GM10248 (cell line): ENCODE measurements at regions of chr2 and their contacts with region 1.

Region 1: GRCh38 chr2:98412751-98413458 is 31.8 kb upstream of the INPP4A start:
- DNase-seq: peak; percentile 63
- CTCF ChIP-seq: peak; percentile 68

Region 2: DNA sequence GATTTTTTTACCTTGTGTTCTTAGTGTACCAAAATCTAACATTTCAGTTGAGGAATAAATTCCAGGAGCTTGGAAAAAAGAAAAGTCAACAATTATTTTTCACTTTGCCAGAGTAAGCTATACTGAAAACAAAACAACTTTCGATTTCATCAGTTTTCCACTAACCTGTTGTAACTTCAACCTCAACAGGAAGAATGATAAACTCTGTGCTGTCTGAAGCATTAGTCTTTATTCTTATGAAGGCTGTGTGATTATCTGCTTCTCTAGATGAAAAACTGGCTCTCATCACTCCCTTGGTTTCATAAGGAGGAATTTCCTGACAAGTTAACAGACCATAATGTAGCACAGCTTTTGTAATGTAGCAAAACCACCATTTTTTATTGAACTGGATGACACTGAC is 578.3 kb before region 1 on chr2:
- CTCF ChIA-PET with region 1: no interaction called
- POLR2A ChIA-PET with region 1: no interaction called
- DNase-seq: no peak
- CTCF ChIP-seq: no peak

Region 3: GRCh38 chr2:97950329-97951154 is 462.4 kb before region 1 on chr2:
- CTCF ChIA-PET with region 1: no interaction called
- POLR2A ChIA-PET with region 1: no interaction called
- DNase-seq: no peak
- CTCF ChIP-seq: no peak

Region 4: DNA sequence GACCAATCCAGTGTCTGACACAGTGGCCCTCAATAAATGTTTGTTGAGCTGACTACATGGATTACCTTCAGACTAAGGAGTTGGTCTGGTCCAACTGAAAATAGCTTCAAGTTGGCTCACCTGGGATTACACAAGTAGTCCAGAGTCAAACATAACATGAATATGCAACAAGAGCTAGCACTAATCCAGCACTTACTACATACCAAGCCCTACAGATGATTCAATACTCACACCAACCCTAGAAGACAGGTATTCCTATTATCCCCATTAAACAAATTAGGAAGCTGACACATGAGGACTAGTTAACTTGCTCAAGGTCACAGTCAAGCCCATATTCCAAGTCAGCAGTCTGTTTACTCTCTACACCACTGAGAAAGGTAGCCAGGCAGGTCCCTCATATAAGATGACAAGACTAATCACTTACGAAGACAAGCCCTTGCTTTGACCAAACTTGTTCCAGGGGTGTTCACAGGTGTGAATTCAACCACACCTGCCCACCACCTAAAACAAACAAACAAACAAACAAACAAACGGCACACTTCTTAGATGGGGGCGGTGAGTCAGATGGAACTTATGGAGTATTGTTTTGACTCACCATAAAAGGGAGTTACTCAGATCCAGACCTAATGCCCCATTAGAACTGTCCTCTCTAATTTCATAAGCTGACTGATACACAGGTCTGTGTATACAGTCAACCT is 446.2 kb before region 1 on chr2:
- CTCF ChIA-PET with region 1: no interaction called
- POLR2A ChIA-PET with region 1: no interaction called
- DNase-seq: peak; percentile 39
- CTCF ChIP-seq: no peak

Region 5: DNA sequence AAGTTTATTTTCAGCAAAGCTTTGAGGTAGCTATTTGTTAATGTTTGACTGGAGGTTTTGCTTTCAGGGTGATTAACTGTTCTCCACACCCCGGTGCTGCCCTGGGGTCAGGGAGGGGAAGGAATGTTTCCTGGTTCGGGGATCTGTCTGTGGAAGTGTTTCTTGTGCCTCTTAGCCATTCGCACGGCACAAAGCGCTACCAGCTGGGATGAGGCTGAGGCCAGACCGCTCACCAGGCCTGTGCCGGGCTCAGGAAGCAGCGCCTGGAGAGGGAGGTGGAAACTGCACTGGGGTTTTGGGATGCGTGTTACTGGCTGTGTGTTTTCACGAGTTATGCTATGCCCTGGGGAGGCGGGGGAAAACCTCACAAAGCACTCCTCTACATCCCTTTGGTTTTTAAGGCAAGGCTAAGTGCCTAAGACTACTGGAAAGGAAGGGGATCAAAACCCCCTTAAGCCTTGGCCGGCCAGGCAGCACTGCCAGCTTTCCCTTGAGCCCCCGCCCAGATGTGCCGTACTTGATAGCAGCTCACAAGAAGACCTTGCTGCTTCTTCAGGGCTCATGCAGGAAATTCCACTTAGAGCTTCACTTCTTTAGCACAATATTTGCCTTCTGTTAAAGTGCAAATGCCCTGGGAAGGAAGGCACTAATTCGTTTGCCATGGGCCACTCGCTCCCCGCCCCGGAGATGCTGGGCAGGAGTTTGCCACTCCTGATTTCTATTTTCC is 132.4 kb before region 1 on chr2:
- CTCF ChIA-PET with region 1: no interaction called
- POLR2A ChIA-PET with region 1: no interaction called
- DNase-seq: peak; percentile 55
- CTCF ChIP-seq: no peak

Region 6: GRCh38 chr2:98426771-98427170 is 13.9 kb after region 1 on chr2:
- CTCF ChIA-PET with region 1: interaction called, 21 read pairs
- POLR2A ChIA-PET with region 1: no interaction called
- DNase-seq: no peak
- CTCF ChIP-seq: no peak

Region 7: GRCh38 chr2:98455494-98455976 is 42.6 kb after region 1 on chr2:
- CTCF ChIA-PET with region 1: interaction called, 25 read pairs
- POLR2A ChIA-PET with region 1: no interaction called
- DNase-seq: peak; percentile 41
- CTCF ChIP-seq: no peak

Region 8: GRCh38 chr2:98541906-98542305 is 129.0 kb after region 1 on chr2:
- CTCF ChIA-PET with region 1: interaction called, 12 read pairs
- POLR2A ChIA-PET with region 1: no interaction called
- DNase-seq: peak; percentile 50
- CTCF ChIP-seq: no peak

Region 9: DNA sequence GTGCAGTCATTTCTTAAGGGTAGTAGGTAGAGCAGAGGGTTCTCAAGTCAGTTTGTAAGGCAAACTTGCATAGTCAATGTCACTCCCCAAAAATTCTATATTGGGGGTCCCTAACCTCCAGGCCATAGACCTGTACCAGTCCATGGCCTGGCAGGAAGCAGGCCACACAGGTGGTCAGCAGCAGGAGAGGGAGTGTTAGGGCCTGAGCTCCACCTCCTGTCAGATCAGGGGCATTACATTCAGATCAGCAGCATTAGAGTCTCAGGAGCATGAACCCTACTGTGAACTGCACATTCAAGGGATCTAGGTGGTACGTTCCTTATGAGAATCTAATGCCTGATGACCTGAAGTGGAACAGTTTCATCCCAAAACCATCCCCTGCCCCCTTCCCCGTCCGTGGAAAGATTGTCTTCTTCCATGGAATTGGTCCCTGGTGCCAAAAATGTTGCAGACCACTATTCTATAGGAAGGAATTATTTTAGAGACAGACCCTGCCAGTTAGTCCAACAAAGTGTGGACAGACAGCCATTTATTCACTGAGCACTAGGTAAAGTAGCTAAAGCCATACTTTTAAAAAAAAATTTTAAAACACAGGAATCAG is 188.7 kb after region 1 on chr2:
- CTCF ChIA-PET with region 1: interaction called, 22 read pairs
- POLR2A ChIA-PET with region 1: no interaction called
- DNase-seq: peak; percentile 43
- CTCF ChIP-seq: peak; percentile 67